Upper lobe of right lung (tissue), 1 donor: ENCODE measurements at regions of chr17 and their contacts with region 1.

Region 1: GRCh38 chr17:67376737-67377487 is at the start of gene PITPNC1:
- DNase-seq: peak; percentile 94
- ATAC-seq: peak; percentile 88
- H3K4me3 ChIP-seq: peak within 1 kb of the TSS; percentile 87
- H3K27ac ChIP-seq: peak within 1 kb of the TSS; percentile 89
- H3K4me1 ChIP-seq: peaks cover 17% of the 10 kb centered on the region
- H3K27me3 ChIP-seq: no peaks in the 10 kb centered on the region
- CTCF ChIP-seq: no peak
- total RNA-seq, gene PITPNC1: 25.4 TPM

Region 2: GRCh38 chr17:67475236-67475937 is 98.5 kb after region 1 on chr17:
- intact Hi-C with region 1: loop called (anchors 5 kb)
- DNase-seq: peak; percentile 88
- ATAC-seq: peak; percentile 97
- H3K4me3 ChIP-seq: no peak overlapping the region
- H3K27ac ChIP-seq: peak overlapping the region; percentile 32
- H3K4me1 ChIP-seq: peaks cover 11% of the 10 kb centered on the region
- H3K27me3 ChIP-seq: no peaks in the 10 kb centered on the region
- CTCF ChIP-seq: peak; percentile 92

Region 3: GRCh38 chr17:67689534-67690177 is 312.7 kb after region 1 on chr17:
- intact Hi-C with region 1: loop called (anchors 10 kb)
- DNase-seq: no peak
- ATAC-seq: peak; percentile 85
- H3K4me3 ChIP-seq: no peak overlapping the region
- H3K27ac ChIP-seq: no peak overlapping the region
- H3K4me1 ChIP-seq: no peaks in the 10 kb centered on the region
- H3K27me3 ChIP-seq: no peaks in the 10 kb centered on the region
- CTCF ChIP-seq: peak; percentile 82